Activated CD4-positive, alpha-beta T cell treated with anti-CD3 and anti-CD28 coated beads, Interleukin-2, amount 10 ng/mL, durations not matched to agents 24 days and 14 days (primary cell): ENCODE measurements at regions of chr7 and their contacts with region 1.

Region 1: DNA sequence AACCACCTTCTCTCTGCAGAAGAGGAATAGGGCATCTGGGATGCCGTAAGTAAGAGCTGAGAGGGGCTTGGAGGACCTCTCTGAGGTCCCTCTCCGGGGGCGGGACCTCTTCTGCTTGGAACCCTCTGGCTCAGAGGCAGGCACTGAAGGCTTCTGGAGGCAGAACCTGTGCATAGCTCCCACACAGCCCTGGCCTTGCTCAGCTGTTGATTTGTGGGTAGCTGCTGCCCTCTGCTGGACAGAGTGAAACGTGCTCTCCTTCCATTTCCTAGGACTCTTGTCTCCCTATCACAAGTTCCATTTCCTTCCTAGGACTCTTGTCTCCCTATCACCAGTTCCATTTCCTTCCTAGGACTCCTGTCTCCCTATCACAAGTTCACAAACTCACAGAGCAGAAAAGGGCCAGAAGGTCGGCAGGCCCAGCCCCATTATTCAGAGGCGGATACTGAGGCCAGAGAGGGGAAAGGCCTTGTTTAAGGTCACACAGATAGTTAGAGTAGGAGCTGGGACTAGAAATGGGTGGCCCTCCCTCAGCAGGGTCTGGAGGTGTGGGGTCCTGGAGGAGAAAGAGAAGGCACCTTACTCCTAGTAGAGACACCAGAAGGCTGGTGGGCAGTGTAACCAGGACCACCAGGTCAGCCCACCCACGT is 30.3 kb upstream of the GARS1 start:
- DNase-seq: peak; percentile 93
- H3K4me3 Mint-ChIP-seq: no peak overlapping the region
- H3K27ac Mint-ChIP-seq: peak overlapping the region; percentile 13
- H3K4me1 Mint-ChIP-seq: peaks cover 2% of the 10 kb centered on the region
- H3K27me3 Mint-ChIP-seq: no peaks in the 10 kb centered on the region

Region 2: GRCh38 chr7:30164567-30164966 is 399.8 kb before region 1 on chr7:
- intact Hi-C with region 1: loop called (anchors 2 kb)
- DNase-seq: no peak
- H3K4me3 Mint-ChIP-seq: no peak overlapping the region
- H3K27ac Mint-ChIP-seq: no peak overlapping the region
- H3K4me1 Mint-ChIP-seq: peaks cover 35% of the 10 kb centered on the region
- H3K27me3 Mint-ChIP-seq: no peaks in the 10 kb centered on the region

Region 3: DNA sequence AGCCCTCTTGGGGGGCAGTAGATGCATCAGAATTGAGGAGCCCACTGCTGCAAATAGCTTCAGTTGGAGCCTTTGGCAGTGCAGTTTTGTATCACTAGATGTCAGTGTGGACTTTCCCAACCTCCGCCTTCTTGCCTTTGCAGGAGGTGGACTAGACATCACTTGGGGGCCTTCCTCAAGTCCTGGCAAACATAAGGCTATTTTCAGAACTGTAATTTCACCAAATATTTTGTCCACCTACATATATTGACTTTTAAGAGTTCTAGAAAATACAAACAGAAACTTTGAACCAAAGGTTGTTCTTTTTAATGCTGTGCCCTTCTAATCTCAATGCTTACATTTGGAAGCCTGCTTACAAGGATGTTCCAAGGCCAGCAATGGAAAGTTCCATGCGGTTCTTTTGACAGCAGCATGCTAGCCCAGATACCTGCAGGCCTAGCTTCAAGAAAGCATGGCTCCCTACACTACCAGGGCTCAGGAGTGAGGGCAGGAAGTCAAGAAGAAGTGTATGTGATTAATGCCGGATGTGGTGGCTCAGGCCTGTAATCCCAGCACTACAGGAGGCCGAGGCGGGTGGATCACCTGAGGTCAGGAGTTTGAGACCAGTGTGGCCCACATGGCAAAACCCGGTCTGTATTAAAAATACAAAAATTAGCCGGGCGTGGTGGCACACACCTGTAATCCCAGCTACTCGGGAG is 288.0 kb before region 1 on chr7:
- intact Hi-C with region 1: loop called (anchors 1 kb)
- DNase-seq: peak; percentile 87
- H3K4me3 Mint-ChIP-seq: no peak overlapping the region
- H3K27ac Mint-ChIP-seq: no peak overlapping the region
- H3K4me1 Mint-ChIP-seq: peaks cover 6% of the 10 kb centered on the region
- H3K27me3 Mint-ChIP-seq: peaks cover 3% of the 10 kb centered on the region

Region 4: GRCh38 chr7:30510124-30511075 is 54.0 kb before region 1 on chr7:
- intact Hi-C with region 1: loop called (anchors 1 kb)
- DNase-seq: peak; percentile 76
- H3K4me3 Mint-ChIP-seq: no peak overlapping the region
- H3K27ac Mint-ChIP-seq: no peak overlapping the region
- H3K4me1 Mint-ChIP-seq: peaks cover 9% of the 10 kb centered on the region
- H3K27me3 Mint-ChIP-seq: no peaks in the 10 kb centered on the region

Region 5: GRCh38 chr7:30548762-30549344 is 15.5 kb before region 1 on chr7:
- intact Hi-C with region 1: loop called (anchors 1 kb)
- DNase-seq: peak; percentile 78
- H3K4me3 Mint-ChIP-seq: no peak overlapping the region
- H3K27ac Mint-ChIP-seq: no peak overlapping the region
- H3K4me1 Mint-ChIP-seq: peaks cover 1% of the 10 kb centered on the region
- H3K27me3 Mint-ChIP-seq: no peaks in the 10 kb centered on the region

Region 6: GRCh38 chr7:31160941-31161340 is 596.6 kb after region 1 on chr7:
- intact Hi-C with region 1: no loop called
- DNase-seq: no peak
- H3K4me3 Mint-ChIP-seq: no peak overlapping the region
- H3K27ac Mint-ChIP-seq: no peak overlapping the region
- H3K4me1 Mint-ChIP-seq: no peaks in the 10 kb centered on the region
- H3K27me3 Mint-ChIP-seq: no peaks in the 10 kb centered on the region